ENCODE measurements at regions of chr1 and their contacts with region 1.

Region 1: DNA sequence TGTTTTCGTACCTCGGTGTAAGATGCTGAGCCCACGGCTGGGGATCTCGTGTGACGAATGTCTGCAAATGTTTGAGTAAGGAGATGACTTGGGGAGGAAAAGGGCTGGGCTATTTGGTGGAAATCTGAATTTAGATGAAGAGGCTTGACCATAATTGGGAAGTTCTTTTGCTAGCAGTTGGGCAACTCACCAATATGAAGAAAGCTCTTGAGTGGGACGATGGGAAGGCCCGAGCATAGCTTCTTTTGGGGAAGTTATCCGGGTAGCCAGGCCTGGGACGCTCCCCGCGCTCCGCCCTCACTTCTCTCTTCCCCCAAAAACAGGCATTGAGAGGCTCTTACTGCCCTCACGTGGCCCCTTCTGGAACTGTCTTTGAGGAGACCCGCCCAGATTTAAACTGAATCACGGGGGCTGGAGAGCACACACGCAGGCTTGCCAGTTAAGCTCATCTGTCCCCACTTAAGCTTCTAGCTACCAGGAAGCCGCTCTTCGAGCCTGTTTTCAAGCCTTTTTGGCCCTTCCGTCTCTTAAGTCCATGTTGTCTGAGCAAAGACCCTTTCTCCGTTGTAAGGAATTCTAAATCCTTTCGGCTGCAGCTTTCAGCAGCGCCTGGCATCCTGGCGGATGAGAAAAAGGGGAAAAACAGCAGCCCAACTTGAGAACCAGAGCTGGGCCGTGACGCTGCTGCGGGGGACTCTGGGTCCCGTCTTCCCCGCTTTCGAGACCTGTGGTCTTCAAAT is 93.1 kb downstream of the NID1 start:
- DNase-seq: peak; percentile 94
- H3K4me3 Mint-ChIP-seq: peak overlapping the region; percentile 67
- H3K27ac Mint-ChIP-seq: peak overlapping the region; percentile 76
- H3K4me1 Mint-ChIP-seq: peaks cover 14% of the 10 kb centered on the region
- H3K27me3 Mint-ChIP-seq: no peaks in the 10 kb centered on the region

Region 2: GRCh38 chr1:235642011-235642942 is 329.5 kb before region 1 on chr1:
- CTCF ChIA-PET with region 1: interaction called, 4 read pairs
- intact Hi-C with region 1: loop called (anchors 5 kb)
- DNase-seq: peak; percentile 84
- H3K4me3 Mint-ChIP-seq: peak overlapping the region; percentile 60
- H3K27ac Mint-ChIP-seq: peak overlapping the region; percentile 61
- H3K4me1 Mint-ChIP-seq: peaks cover 18% of the 10 kb centered on the region
- H3K27me3 Mint-ChIP-seq: peaks cover 30% of the 10 kb centered on the region

Region 3: DNA sequence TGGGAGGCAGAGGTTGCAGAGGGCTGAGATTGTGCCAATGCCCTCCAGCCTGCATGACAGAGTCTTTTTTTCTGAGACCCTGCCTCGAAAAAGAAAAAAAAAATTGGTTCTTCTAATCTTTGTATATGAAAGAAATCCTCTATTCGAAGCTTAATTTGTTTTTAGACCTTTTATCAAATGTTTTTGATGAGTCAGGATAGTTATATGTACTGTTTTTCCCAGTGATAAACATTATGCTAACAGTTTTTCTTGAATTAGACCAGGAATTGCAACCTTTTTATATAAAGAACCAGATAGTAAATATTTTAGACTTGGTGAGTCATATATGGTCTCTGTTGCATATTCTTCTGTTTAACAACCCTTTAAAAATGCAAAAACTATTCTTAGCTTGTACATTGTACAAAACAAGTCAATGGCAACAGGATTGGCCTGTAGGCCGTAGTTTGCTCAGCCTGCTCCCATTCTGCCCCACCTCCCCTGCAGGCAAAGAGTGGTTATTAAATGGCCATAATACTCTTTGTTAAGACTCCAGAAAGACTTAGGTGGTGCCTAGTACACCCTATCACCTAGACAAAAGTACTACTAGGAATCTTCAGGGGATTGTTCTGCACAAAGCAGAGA is 150.3 kb before region 1 on chr1:
- CTCF ChIA-PET with region 1: interaction called, 13 read pairs
- intact Hi-C with region 1: no loop called
- DNase-seq: no peak
- H3K4me3 Mint-ChIP-seq: no peak overlapping the region
- H3K27ac Mint-ChIP-seq: no peak overlapping the region
- H3K4me1 Mint-ChIP-seq: no peaks in the 10 kb centered on the region
- H3K27me3 Mint-ChIP-seq: no peaks in the 10 kb centered on the region

Region 4: GRCh38 chr1:235888119-235888643 is 83.6 kb before region 1 on chr1:
- CTCF ChIA-PET with region 1: interaction called, 11 read pairs
- intact Hi-C with region 1: loop called (anchors 1 kb)
- DNase-seq: peak; percentile 61
- H3K4me3 Mint-ChIP-seq: peak overlapping the region; percentile 16
- H3K27ac Mint-ChIP-seq: peak overlapping the region; percentile 82
- H3K4me1 Mint-ChIP-seq: peaks cover 41% of the 10 kb centered on the region
- H3K27me3 Mint-ChIP-seq: no peaks in the 10 kb centered on the region

Region 5: DNA sequence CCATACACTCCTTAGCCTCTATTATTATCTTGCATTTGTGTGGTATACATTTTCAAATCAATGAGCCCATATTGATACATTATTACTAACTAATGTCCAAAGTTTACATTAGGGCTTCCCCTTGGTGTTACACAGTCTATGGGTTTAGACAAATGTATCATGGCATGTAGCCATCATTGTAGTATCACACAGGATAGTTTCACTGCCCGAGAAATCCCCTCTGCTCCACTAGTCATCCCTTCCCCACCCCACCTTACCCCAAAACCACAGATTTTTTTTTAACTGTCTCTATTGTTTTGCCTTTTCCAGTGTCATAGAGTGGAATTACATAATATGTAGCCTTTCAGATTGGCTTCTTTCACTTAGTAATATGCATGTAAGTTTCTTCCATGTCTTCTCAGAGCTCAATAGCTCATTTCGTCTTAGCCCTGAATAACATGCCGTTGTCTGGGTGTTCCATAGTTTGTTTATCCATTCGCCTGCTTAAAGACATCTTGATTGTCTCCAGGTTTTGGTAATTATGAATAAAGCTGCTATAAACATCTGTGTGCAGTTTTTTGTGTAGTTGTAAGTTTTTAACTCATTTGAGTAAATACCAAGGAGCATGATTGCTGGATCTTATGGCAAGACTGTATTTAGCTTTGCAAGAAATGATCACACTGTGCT is 18.7 kb before region 1 on chr1:
- CTCF ChIA-PET with region 1: interaction called, 36 read pairs
- intact Hi-C with region 1: loop called (anchors 1 kb)
- DNase-seq: peak; percentile 60
- H3K4me3 Mint-ChIP-seq: no peak overlapping the region
- H3K27ac Mint-ChIP-seq: no peak overlapping the region
- H3K4me1 Mint-ChIP-seq: peaks cover 38% of the 10 kb centered on the region
- H3K27me3 Mint-ChIP-seq: no peaks in the 10 kb centered on the region

Measured in activated naive CD4-positive, alpha-beta T cell treated with anti-CD3 and anti-CD28 coated beads for 36 hours (primary cell).